ENCODE measurements at regions of chr16 and their contacts with region 1.

Region 1: GRCh38 chr16:31142109-31143010 is 6.8 kb upstream of the PRSS8 start:
- DNase-seq: peak; percentile 92 to 99 (median 96)
- ATAC-seq: peak; percentile 85 to 87
- H3K4me3 Mint-ChIP-seq: peak overlapping the region; percentile 52 to 82 (median 68)
- H3K27ac Mint-ChIP-seq: peak overlapping the region; percentile 8 to 95 (median 90)
- H3K4me1 Mint-ChIP-seq: peaks cover 10 to 18% (median 15%) of the 10 kb centered on the region in 4 donors
- H3K27me3 Mint-ChIP-seq: peaks cover 0 to under 1% (median 0%) of the 10 kb centered on the region in 5 donors

Region 2: DNA sequence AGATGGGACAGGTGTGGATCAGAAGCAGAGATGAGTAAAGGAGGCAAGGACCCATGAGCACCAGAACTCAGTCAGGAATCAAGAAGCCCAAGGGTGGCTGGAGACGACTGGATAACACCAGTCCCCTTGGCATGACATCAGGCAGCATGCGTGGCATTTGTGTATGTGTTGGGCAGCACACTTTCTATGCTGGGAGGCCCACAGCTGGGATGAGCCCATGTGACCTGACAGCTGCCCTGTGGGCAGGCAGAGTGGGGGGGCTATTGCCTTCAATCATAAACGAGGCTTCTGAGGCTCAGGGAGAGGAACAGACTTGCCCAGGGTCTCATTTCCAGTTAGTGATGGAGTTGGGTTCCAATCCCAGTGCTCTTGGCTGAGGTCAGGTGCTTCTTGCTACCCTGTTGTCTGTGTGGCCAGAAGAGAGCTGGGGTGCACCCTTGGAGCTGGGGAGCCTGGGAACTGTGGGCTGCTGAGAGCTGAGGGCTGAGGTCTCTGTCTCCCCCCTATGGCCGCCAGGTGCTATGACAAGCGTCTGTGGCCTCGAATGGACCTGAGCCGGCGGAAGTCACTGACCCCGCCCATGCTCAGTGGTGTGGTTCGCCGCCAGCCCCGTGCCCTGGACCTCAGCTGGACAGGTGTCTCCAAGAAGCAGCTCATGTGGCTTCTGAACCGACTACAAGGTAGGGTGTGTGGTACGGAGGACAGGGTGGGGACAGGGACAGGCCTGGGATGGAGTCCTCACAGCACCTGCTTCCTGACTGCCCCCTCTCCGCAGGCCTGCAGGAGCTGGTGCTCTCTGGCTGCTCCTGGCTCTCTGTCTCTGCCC is 200.5 kb before region 1 on chr16:
- POLR2A ChIA-PET with region 1: no interaction called
- DNase-seq: peak in 9 of 10 donors; percentile 36 to 67 (median 52)
- ATAC-seq: peak; percentile 93 to 98
- H3K4me3 Mint-ChIP-seq: peak overlapping the region in 2 of 10 donors; percentile 12 to 55
- H3K27ac Mint-ChIP-seq: peak overlapping the region in 4 of 10 donors; percentile 34 to 62 (median 48)
- H3K4me1 Mint-ChIP-seq: peaks cover 14 to 21% (median 19%) of the 10 kb centered on the region in 4 donors
- H3K27me3 Mint-ChIP-seq: no peaks in the 10 kb centered on the region

Region 3: GRCh38 chr16:31008154-31008950 is 134.0 kb before region 1 on chr16:
- POLR2A ChIA-PET with region 1: no interaction called
- DNase-seq: no peak
- ATAC-seq: no peak
- H3K4me3 Mint-ChIP-seq: peak overlapping the region in 2 of 10 donors; percentile 43 to 45
- H3K27ac Mint-ChIP-seq: no peak overlapping the region
- H3K4me1 Mint-ChIP-seq: peaks cover 9 to 29% (median 20%) of the 10 kb centered on the region in 4 donors
- H3K27me3 Mint-ChIP-seq: peaks cover 0 to 11% (median 8%) of the 10 kb centered on the region in 5 donors

Region 4: GRCh38 chr16:31032736-31033708 is 109.3 kb before region 1 on chr16 and contains the start of gene STX4:
- POLR2A ChIA-PET with region 1: interaction called, 16 read pairs
- DNase-seq: peak; percentile 92 to 99 (median 97)
- ATAC-seq: peak; percentile 77 to 84
- H3K4me3 Mint-ChIP-seq: peak within 1 kb of the TSS; percentile 95 to 100 (median 98)
- H3K27ac Mint-ChIP-seq: peak within 1 kb of the TSS; percentile 93 to 100 (median 99)
- H3K4me1 Mint-ChIP-seq: peaks cover 16 to 39% (median 34%) of the 10 kb centered on the region in 4 donors
- H3K27me3 Mint-ChIP-seq: peaks cover 0 to 3% (median 0%) of the 10 kb centered on the region in 5 donors
- polyA plus RNA-seq, gene STX4: 23.2 to 31.3 (median 23.7) TPM

Region 5: DNA sequence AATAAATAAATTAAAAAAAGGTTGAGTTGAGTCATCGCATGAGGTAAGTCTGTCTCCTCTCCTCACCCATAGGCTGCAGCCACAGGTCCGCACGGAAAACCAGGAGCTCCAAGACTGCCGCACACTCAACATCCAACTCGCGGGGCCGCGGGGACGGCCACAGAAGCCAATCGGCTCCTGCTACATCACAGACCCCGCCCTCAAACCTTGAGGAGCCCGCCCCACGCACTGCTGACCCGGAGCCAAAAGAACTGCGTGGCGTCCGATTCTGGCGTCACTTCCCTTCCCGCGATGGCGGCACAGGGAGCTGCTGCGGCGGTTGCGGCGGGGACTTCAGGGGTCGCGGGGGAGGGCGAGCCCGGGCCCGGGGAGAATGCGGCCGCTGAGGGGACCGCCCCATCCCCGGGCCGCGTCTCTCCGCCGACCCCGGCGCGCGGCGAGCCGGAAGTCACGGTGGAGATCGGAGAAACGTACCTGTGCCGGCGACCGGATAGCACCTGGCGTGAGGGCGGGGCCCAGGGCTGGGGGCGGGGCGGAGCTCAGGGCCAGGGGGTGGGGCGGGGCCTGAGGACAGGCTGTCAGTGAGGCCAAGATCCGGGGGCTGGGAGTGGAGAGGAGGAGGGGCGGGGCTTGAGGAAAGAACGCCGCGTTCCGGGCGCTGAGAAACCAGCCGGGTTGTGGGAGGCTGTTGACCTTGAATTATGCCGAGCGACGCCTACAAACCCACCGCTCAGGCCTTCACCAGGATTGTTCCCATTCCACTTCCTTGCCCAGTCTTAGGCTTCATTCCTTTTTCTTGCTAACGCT is 24.8 kb before region 1 on chr16 and contains the start of gene KAT8:
- POLR2A ChIA-PET with region 1: interaction called, 76 read pairs
- DNase-seq: peak; percentile 93 to 99 (median 98)
- ATAC-seq: peak; percentile 92
- H3K4me3 Mint-ChIP-seq: peak within 1 kb of the TSS; percentile 83 to 93 (median 88)
- H3K27ac Mint-ChIP-seq: peak within 1 kb of the TSS; percentile 68 to 97 (median 94)
- H3K4me1 Mint-ChIP-seq: peaks cover 18 to 38% (median 24%) of the 10 kb centered on the region in 4 donors
- H3K27me3 Mint-ChIP-seq: no peaks in the 10 kb centered on the region
- polyA plus RNA-seq, gene KAT8: 58.0 to 90.5 (median 67.4) TPM

Region 6: GRCh38 chr16:31157136-31157535 is 14.8 kb after region 1 on chr16:
- POLR2A ChIA-PET with region 1: interaction called, 11 read pairs
- DNase-seq: no peak
- ATAC-seq: no peak
- H3K4me3 Mint-ChIP-seq: peak overlapping the region in 8 of 10 donors; percentile 31 to 65 (median 48)
- H3K27ac Mint-ChIP-seq: peak overlapping the region in 3 of 10 donors; percentile 35 to 66 (median 60)
- H3K4me1 Mint-ChIP-seq: peaks cover 0 to 11% (median 5%) of the 10 kb centered on the region in 4 donors
- H3K27me3 Mint-ChIP-seq: no peaks in the 10 kb centered on the region

Region 7: GRCh38 chr16:31202414-31203375 is 60.3 kb after region 1 on chr16 and contains the start of gene PYCARD:
- POLR2A ChIA-PET with region 1: interaction called, 26 read pairs
- DNase-seq: peak in 4 of 10 donors; percentile 18 to 55 (median 40)
- ATAC-seq: peak; percentile 41 to 45
- H3K4me3 Mint-ChIP-seq: peak within 1 kb of the TSS; percentile 85 to 93 (median 89)
- H3K27ac Mint-ChIP-seq: peak within 1 kb of the TSS; percentile 80 to 91 (median 88)
- H3K4me1 Mint-ChIP-seq: peaks cover 30 to 56% (median 54%) of the 10 kb centered on the region in 4 donors
- H3K27me3 Mint-ChIP-seq: no peaks in the 10 kb centered on the region
- polyA plus RNA-seq, gene PYCARD: 39.3 to 65.2 (median 39.7) TPM

Region 8: GRCh38 chr16:31292704-31293103 is 150.3 kb after region 1 on chr16:
- POLR2A ChIA-PET with region 1: no interaction called
- DNase-seq: no peak
- ATAC-seq: no peak
- H3K4me3 Mint-ChIP-seq: no peak overlapping the region
- H3K27ac Mint-ChIP-seq: peak overlapping the region in 1 of 10 donors; percentile 19
- H3K4me1 Mint-ChIP-seq: peaks cover 0 to 11% (median 0%) of the 10 kb centered on the region in 4 donors
- H3K27me3 Mint-ChIP-seq: peaks cover 0 to 4% (median 3%) of the 10 kb centered on the region in 5 donors

Region 9: DNA sequence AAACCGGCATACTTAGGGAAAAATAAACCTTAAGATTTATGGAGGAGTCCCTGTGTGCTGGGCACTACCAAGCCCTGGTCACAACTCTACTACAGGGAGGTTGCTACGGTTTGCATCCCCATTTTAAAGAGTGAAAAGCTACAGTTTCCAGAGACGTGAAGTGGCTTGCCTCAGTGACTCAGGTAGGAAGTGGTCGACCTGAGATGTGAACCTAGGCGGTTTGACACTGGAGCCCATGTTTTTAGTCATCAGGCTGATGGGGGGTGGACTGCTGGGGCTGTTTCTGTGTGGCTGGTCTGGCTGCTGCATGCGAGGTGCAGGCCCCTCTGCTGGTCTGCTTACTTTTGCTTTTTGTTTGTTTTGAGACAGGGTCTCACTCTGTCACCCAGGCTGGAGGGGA is 279.2 kb after region 1 on chr16:
- POLR2A ChIA-PET with region 1: interaction called, 10 read pairs
- DNase-seq: peak in 2 of 10 donors; percentile 11 to 41
- ATAC-seq: peak in 1 of 2 donors; percentile 23
- H3K4me3 Mint-ChIP-seq: peak overlapping the region in 2 of 10 donors; percentile 19 to 72
- H3K27ac Mint-ChIP-seq: peak overlapping the region in 2 of 10 donors; percentile 7 to 59
- H3K4me1 Mint-ChIP-seq: peaks cover 0 to 39% (median 6%) of the 10 kb centered on the region in 4 donors
- H3K27me3 Mint-ChIP-seq: peaks cover 2 to 25% (median 11%) of the 10 kb centered on the region in 5 donors